ENCODE measurements at regions of chr4 and their contacts with region 1.

Region 1: GRCh38 chr4:53929955-53930798 is 134.2 kb downstream of the CHIC2 start:
- DNase-seq: peak; percentile 26 to 75 (median 60)
- ATAC-seq: peak; percentile 55
- H3K4me3 ChIP-seq: no peak overlapping the region
- H3K4me3 Mint-ChIP-seq: no peak overlapping the region
- H3K27ac ChIP-seq: no peak overlapping the region
- H3K27ac Mint-ChIP-seq: no peak overlapping the region
- H3K4me1 ChIP-seq: no peaks in the 10 kb centered on the region
- H3K4me1 Mint-ChIP-seq: no peaks in the 10 kb centered on the region
- H3K27me3 ChIP-seq: peaks cover 0 to 4% of the 10 kb centered on the region in 2 experiments
- H3K27me3 Mint-ChIP-seq: peaks cover 10% of the 10 kb centered on the region
- CTCF ChIP-seq: peak; percentile 75

Region 2: GRCh38 chr4:53196882-53197771 is 733.0 kb before region 1 on chr4:
- CTCF ChIA-PET with region 1: interaction called, 7 read pairs
- POLR2A ChIA-PET with region 1: no interaction called
- intact Hi-C with region 1: loop called (anchors 1 to 5 kb)
- DNase-seq: peak in 2 of 9 experiments; percentile 62 to 69
- ATAC-seq: no peak
- H3K4me3 ChIP-seq: no peak overlapping the region
- H3K4me3 Mint-ChIP-seq: no peak overlapping the region
- H3K27ac ChIP-seq: no peak overlapping the region
- H3K27ac Mint-ChIP-seq: no peak overlapping the region
- H3K4me1 ChIP-seq: no peaks in the 10 kb centered on the region
- H3K4me1 Mint-ChIP-seq: no peaks in the 10 kb centered on the region
- H3K27me3 ChIP-seq: no peaks in the 10 kb centered on the region
- H3K27me3 Mint-ChIP-seq: no peaks in the 10 kb centered on the region
- CTCF ChIP-seq: peak; percentile 79

Region 3: DNA sequence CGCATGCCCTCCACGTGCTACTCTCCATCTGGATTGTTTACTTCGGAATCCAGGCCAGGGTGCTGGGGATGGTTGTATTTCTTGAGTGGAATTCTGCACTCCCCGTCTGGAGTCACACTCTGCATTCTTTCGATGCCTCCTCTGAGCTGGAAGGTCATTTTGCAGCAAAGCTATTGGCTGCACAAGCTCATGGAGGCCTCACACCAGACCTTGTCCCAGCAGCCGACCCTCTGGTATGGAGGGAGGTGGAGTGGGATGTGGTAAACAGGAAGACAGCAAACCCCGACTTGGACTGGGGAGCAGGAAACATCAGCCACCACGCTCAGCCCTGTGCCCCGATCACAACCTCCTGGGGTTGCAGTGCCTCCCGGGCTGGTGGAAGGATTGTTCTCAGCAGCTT is 113.6 kb before region 1 on chr4:
- CTCF ChIA-PET with region 1: no interaction called
- POLR2A ChIA-PET with region 1: no interaction called
- intact Hi-C with region 1: no loop called
- DNase-seq: no peak
- ATAC-seq: no peak
- H3K4me3 ChIP-seq: no peak overlapping the region
- H3K4me3 Mint-ChIP-seq: no peak overlapping the region
- H3K27ac ChIP-seq: no peak overlapping the region
- H3K27ac Mint-ChIP-seq: no peak overlapping the region
- H3K4me1 ChIP-seq: no peaks in the 10 kb centered on the region
- H3K4me1 Mint-ChIP-seq: no peaks in the 10 kb centered on the region
- H3K27me3 ChIP-seq: no peaks in the 10 kb centered on the region
- H3K27me3 Mint-ChIP-seq: peaks cover 8% of the 10 kb centered on the region
- CTCF ChIP-seq: no peak

Region 4: GRCh38 chr4:53847965-53848364 is 82.2 kb before region 1 on chr4:
- CTCF ChIA-PET with region 1: no interaction called
- POLR2A ChIA-PET with region 1: no interaction called
- intact Hi-C with region 1: no loop called
- DNase-seq: no peak
- ATAC-seq: no peak
- H3K4me3 ChIP-seq: no peak overlapping the region
- H3K4me3 Mint-ChIP-seq: no peak overlapping the region
- H3K27ac ChIP-seq: no peak overlapping the region
- H3K27ac Mint-ChIP-seq: no peak overlapping the region
- H3K4me1 ChIP-seq: no peaks in the 10 kb centered on the region
- H3K4me1 Mint-ChIP-seq: no peaks in the 10 kb centered on the region
- H3K27me3 ChIP-seq: no peaks in the 10 kb centered on the region
- H3K27me3 Mint-ChIP-seq: no peaks in the 10 kb centered on the region
- CTCF ChIP-seq: no peak

Region 5: GRCh38 chr4:53908661-53909078 is 21.5 kb before region 1 on chr4:
- CTCF ChIA-PET with region 1: interaction called, 22 read pairs
- POLR2A ChIA-PET with region 1: no interaction called
- intact Hi-C with region 1: no loop called
- DNase-seq: peak in 2 of 9 experiments; percentile 31 to 48
- ATAC-seq: no peak
- H3K4me3 ChIP-seq: no peak overlapping the region
- H3K4me3 Mint-ChIP-seq: no peak overlapping the region
- H3K27ac ChIP-seq: no peak overlapping the region
- H3K27ac Mint-ChIP-seq: no peak overlapping the region
- H3K4me1 ChIP-seq: peaks cover 7% of the 10 kb centered on the region
- H3K4me1 Mint-ChIP-seq: peaks cover 13% of the 10 kb centered on the region
- H3K27me3 ChIP-seq: peaks cover 0 to 8% of the 10 kb centered on the region in 2 experiments
- H3K27me3 Mint-ChIP-seq: peaks cover 47% of the 10 kb centered on the region
- CTCF ChIP-seq: no peak

Region 6: GRCh38 chr4:53967986-53968385 is 37.8 kb after region 1 on chr4:
- CTCF ChIA-PET with region 1: no interaction called
- POLR2A ChIA-PET with region 1: no interaction called
- intact Hi-C with region 1: no loop called
- DNase-seq: no peak
- ATAC-seq: no peak
- H3K4me3 ChIP-seq: no peak overlapping the region
- H3K4me3 Mint-ChIP-seq: no peak overlapping the region
- H3K27ac ChIP-seq: no peak overlapping the region
- H3K27ac Mint-ChIP-seq: no peak overlapping the region
- H3K4me1 ChIP-seq: no peaks in the 10 kb centered on the region
- H3K4me1 Mint-ChIP-seq: no peaks in the 10 kb centered on the region
- H3K27me3 ChIP-seq: no peaks in the 10 kb centered on the region
- H3K27me3 Mint-ChIP-seq: no peaks in the 10 kb centered on the region
- CTCF ChIP-seq: no peak

Region 7: GRCh38 chr4:54228056-54228527 is 297.9 kb after region 1 on chr4:
- CTCF ChIA-PET with region 1: interaction called, 141 read pairs
- POLR2A ChIA-PET with region 1: no interaction called
- intact Hi-C with region 1: no loop called
- DNase-seq: peak in 3 of 9 experiments; percentile 25 to 53 (median 35)
- ATAC-seq: peak; percentile 36
- H3K4me3 ChIP-seq: peak overlapping the region in 1 of 2 experiments; percentile 37
- H3K4me3 Mint-ChIP-seq: peak overlapping the region; percentile 2
- H3K27ac ChIP-seq: no peak overlapping the region
- H3K27ac Mint-ChIP-seq: no peak overlapping the region
- H3K4me1 ChIP-seq: peaks cover 52% of the 10 kb centered on the region
- H3K4me1 Mint-ChIP-seq: peaks cover 40% of the 10 kb centered on the region
- H3K27me3 ChIP-seq: peaks cover 46 to 47% of the 10 kb centered on the region in 2 experiments
- H3K27me3 Mint-ChIP-seq: peaks cover 75% of the 10 kb centered on the region
- CTCF ChIP-seq: no peak